ENCODE measurements at regions of chr18 and their contacts with region 1.

Region 1: GRCh38 chr18:3447895-3448837 is 1.8 kb upstream of the TGIF1 start:
- DNase-seq: peak; percentile 98
- H3K4me3 Mint-ChIP-seq: peak overlapping the region; percentile 95
- H3K27ac Mint-ChIP-seq: peak overlapping the region; percentile 99
- H3K4me1 Mint-ChIP-seq: peaks cover 12% of the 10 kb centered on the region
- H3K27me3 Mint-ChIP-seq: no peaks in the 10 kb centered on the region
- CTCF ChIP-seq: no peak

Region 2: DNA sequence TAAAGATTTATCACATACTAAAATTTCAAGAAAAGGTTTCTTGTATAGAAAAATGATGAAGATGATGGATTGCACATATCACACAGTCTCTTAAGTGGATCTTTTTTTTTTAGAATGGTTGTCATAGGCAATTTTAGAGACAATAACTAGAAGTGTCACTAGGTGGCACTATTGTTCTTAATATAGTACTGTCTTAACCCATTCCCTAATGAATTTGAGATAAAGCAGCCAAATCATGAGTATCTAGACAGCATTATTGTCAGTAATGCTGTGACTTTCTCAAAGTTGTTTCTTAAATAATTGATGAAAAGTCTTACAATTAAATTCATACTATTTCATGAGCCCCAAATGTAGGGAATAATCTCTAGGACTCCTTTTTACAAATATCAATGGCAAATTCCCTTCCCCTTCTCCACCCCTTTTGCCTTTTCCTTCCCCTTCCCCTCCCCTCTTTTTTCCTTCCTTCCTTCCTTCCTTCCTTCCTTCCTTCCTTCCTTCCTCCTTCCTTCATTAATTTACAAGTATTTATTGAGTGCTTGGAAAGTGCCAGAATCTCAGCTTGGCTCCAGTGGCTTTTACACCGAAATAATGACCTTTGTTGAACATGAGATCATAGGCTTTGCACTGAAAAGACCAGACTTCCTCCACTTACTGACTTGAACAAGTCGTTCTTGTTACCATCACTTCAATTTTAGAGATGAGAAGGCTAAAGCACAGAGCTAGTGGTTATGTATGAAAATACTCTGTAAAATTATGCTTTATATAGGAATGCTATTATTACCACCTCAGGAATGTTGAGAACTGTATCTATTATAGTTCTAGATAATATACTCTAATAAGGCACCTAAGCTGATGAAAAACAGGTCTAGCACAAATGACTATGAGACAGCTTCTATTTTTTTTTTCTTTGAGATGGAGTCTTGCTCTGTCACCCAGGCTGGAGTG is 166.4 kb before region 1 on chr18:
- CTCF ChIA-PET with region 1: interaction called, 57 read pairs
- POLR2A ChIA-PET with region 1: interaction called, 59 read pairs
- intact Hi-C with region 1: loop called (anchors 1 kb)
- DNase-seq: peak; percentile 80
- H3K4me3 Mint-ChIP-seq: no peak overlapping the region
- H3K27ac Mint-ChIP-seq: no peak overlapping the region
- H3K4me1 Mint-ChIP-seq: peaks cover 6% of the 10 kb centered on the region
- H3K27me3 Mint-ChIP-seq: no peaks in the 10 kb centered on the region
- CTCF ChIP-seq: peak; percentile 52

Region 3: DNA sequence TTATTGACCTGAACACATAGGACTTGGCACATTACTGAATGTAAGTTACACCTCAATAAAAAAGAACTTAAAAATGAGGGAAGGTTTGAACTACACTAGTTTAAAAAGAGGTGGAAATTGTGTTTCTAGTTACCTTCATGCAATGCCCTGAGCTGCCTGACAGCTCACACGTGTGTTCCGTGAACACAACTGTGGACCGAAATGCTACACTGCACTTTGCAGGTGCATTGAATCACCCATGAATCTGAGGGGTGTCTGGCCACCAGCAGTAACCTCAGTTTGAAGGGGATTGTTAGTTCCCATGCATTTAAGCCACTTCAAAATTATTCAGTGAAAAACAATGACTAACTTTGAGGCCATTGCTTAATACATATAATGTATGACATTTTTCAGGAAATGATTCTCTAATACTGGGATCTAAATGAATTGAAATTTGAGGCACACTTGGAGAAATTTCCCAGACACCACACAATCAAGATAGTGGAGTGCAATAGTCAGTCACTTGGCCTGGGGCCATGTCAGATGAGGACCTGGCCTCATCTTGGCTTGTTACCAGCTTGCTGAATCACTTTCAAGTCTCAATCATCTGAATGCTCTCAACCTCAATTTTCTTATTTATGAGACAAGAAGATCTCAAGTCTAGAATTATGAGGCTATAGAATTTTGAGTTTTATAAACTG is 126.9 kb before region 1 on chr18:
- CTCF ChIA-PET with region 1: interaction called, 3 read pairs
- POLR2A ChIA-PET with region 1: interaction called, 13 read pairs
- intact Hi-C with region 1: no loop called
- DNase-seq: peak; percentile 99
- H3K4me3 Mint-ChIP-seq: no peak overlapping the region
- H3K27ac Mint-ChIP-seq: no peak overlapping the region
- H3K4me1 Mint-ChIP-seq: peaks cover 17% of the 10 kb centered on the region
- H3K27me3 Mint-ChIP-seq: no peaks in the 10 kb centered on the region
- CTCF ChIP-seq: no peak

Region 4: GRCh38 chr18:3411854-3412268 is 36.3 kb before region 1 on chr18:
- CTCF ChIA-PET with region 1: interaction called, 4 read pairs
- POLR2A ChIA-PET with region 1: interaction called, 13 read pairs
- intact Hi-C with region 1: no loop called
- DNase-seq: no peak
- H3K4me3 Mint-ChIP-seq: peak overlapping the region; percentile 64
- H3K27ac Mint-ChIP-seq: peak overlapping the region; percentile 57
- H3K4me1 Mint-ChIP-seq: peaks cover 11% of the 10 kb centered on the region
- H3K27me3 Mint-ChIP-seq: no peaks in the 10 kb centered on the region
- CTCF ChIP-seq: no peak

Region 5: DNA sequence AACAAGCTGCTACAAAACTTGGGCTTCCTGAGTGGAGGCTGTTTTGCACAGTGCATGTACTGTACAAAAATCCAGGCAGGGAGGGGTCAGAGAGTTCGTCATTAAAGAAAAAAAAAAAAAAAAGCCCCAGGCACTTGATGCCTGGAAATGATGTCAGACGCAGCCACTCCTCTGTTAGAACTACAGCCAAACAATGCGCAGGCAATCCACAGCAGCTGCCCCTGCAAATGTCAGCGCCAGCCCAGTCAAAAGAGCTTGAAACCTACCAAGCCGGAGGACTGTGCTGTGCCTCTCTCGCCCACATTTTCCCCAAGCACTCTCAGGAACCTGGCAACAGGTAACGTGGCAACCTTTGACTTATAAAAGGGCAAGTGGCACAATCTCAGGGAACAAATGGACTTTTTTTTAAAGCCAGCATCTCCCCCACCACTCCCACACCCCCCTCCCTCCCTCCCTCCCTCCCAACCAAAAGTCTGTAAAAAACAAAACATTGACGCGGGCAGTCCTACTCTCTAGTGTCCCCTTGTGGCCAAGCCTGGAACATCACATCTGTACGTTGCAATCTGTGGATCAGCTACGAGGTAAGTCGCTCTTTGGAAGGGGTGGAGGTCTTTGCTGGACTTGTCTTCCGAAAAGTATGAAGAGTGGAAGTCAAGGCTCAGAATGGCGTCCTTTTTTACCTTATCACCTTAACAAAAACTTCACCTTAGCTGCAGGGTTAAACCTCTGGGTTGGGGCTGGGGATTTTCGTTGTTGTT is 145.9 kb after region 1 on chr18:
- CTCF ChIA-PET with region 1: interaction called, 76 read pairs
- POLR2A ChIA-PET with region 1: interaction called, 325 read pairs
- intact Hi-C with region 1: loop called (anchors 1 kb)
- DNase-seq: peak; percentile 96
- H3K4me3 Mint-ChIP-seq: peak overlapping the region; percentile 82
- H3K27ac Mint-ChIP-seq: peak overlapping the region; percentile 98
- H3K4me1 Mint-ChIP-seq: peaks cover 40% of the 10 kb centered on the region
- H3K27me3 Mint-ChIP-seq: no peaks in the 10 kb centered on the region
- CTCF ChIP-seq: peak; percentile 80

Region 6: DNA sequence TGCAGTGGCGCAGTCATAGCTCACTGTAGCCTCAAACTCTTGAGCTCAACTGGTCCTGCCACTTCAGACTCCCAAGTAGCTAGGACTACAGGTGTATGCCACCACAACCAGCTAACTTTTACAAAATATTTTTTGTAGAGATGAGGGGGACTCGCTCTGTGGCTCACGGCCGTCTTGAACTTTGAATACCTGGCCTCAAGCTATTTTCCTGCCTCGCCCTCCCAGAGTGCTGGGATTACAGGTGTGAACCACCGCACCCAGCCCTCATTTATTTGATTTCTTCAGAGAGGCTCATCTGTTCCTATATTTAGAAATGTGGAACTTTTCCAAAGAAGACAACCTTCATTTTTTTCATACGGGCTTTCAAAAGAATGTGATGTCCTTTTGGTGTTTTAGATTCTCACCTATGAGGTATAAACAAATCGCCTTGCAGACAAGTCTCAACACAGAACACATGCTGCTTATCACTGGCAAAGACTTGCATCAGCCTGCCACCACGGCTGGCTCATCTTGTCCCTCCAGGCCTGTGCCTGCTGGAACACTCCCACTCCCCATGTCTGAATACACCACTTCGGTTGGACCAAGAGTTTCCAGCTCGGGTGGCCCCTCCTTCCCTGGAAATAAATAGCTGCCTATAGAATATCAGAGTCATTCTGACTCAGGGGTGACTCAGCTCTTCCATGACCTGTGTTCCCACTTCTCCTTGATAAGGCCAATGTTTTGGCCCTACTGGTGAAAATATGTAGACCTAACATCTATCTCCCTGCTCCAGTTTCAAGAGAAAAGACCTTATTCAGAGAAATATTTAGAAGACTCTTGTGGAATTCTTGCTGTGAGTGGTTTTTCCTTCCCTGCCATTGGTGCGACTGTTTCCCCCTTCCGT is 204.5 kb after region 1 on chr18:
- CTCF ChIA-PET with region 1: no interaction called
- POLR2A ChIA-PET with region 1: interaction called, 69 read pairs
- intact Hi-C with region 1: no loop called
- DNase-seq: peak; percentile 99
- H3K4me3 Mint-ChIP-seq: peak overlapping the region; percentile 4
- H3K27ac Mint-ChIP-seq: peak overlapping the region; percentile 91
- H3K4me1 Mint-ChIP-seq: peaks cover 41% of the 10 kb centered on the region
- H3K27me3 Mint-ChIP-seq: no peaks in the 10 kb centered on the region
- CTCF ChIP-seq: peak; percentile 13

Region 7: GRCh38 chr18:3998698-3999333 is 550.6 kb after region 1 on chr18:
- CTCF ChIA-PET with region 1: no interaction called
- POLR2A ChIA-PET with region 1: no interaction called
- intact Hi-C with region 1: no loop called
- DNase-seq: peak; percentile 59
- H3K4me3 Mint-ChIP-seq: no peak overlapping the region
- H3K27ac Mint-ChIP-seq: no peak overlapping the region
- H3K4me1 Mint-ChIP-seq: no peaks in the 10 kb centered on the region
- H3K27me3 Mint-ChIP-seq: peaks cover 10% of the 10 kb centered on the region
- CTCF ChIP-seq: peak; percentile 73

Measured in MCF 10A (cell line).